GM18951 (cell line): ENCODE measurements at regions of chr22 and their contacts with region 1.

Region 1: DNA sequence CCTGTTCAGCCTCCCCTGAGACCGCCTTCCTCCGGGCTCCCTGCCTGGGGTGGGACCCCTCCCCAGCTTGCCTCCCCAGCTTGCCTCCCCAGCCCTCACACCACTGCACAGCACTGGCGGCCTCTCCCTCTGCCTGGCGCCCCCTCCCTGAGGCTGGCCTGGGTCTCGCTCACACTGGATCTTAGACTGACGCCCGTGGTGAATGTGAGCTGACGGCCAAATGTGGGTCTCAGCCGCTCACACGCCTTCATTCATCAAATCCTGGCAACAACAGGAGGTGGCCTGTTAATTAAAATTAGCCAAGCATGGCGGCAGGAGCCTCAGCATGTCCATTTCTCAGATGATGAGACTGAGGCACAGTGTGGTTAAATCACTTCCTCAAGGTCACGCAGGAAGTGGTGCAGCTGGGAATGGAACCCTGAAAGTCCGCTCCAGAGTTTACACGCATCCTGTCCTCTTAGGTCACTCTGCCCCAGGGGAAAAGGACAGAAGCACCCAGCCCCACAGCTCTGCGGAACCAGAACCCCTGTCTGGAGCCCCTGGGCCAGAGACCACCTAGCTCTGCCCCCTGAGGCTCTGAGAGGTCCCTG is 19.7 kb downstream of the RPL3 start:
- POLR2A ChIP-seq: no peak

Region 2: DNA sequence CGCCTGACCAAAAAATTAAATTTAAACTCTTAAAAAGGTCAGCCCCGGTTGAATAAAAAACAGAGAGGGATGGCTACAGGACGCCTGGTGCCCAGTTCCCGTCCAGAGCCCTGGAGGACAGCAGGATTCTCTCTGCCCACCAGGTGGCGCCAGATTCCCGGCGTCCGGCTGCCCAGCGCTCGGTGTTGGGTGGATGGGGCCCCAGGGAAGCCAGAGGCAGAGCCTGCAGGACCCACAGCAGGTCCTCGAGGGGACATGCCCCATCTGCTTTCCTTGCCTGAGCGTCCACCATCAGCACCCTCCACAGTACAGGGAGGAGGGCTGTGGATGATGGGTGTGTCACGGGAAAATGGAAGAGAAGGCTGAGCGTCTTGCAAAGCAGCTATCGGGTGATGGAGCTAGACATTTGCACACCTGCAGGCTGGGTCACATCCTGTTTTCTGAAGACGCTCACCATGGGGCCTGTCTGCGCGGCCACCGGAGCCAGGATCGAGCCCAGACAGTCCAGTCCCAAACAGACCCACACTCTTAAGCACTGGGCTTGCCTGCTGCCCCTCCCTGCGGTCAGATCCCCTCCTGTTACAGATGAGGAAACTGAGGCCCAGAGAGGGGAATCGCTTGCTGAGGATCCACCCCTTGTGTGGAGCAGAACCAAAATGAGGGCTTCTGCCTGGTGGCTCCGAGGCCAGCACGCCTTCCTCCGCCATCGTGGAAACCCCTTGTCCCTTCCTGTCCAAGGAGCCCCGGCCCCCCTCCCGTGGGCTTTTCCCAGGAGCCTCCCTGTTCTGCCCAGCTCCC is 128.7 kb before region 1 on chr22:
- in situ Hi-C with region 1: loop called (anchors 5 kb)
- POLR2A ChIP-seq: peak; percentile 17

Region 3: DNA sequence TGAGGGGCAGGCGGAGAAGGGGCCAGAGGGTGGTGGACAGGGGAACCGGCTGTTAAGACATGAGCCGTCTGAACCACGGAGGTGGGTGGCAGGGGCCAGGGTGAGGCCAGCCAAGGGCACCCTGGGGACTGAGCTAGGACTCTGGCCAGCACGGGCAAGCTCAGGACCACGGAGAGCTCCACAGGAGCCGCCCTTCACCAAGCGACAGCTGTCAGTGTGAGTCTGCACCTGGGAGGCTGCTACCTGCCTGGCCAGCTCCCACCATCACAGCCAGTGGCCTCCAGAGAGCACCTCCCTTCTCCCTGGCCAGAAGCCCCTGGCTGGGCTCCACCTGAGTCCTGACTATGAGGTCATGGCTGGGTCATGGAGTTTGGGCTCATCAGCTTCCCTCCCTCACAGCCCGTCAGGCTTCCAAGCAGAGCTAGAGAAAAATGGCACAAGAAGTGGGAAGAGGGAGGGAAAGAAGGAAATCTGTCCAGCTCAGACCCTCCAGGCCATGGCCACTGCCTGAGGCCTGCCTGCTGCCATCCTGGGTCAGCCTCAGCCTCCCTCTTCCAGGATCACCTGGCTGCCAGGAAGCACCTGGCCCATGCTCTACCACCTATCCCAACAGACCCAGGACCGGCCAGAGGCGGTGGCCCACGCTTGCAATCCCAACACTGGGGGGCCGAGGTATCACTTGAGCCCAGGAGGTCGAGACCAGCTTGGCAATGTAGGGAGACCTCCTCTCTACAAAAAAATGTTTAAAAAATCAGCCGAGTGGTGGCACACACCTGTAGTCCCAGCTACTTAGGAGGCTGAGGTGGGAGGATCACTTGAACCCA is 179.0 kb after region 1 on chr22:
- in situ Hi-C with region 1: no loop called
- POLR2A ChIP-seq: no peak